Transverse colon (tissue), 4 donors: ENCODE measurements at regions of chr1 and their contacts with region 1.

Region 1: GRCh38 chr1:109539676-109540075 is at the start of gene GPR61:
- DNase-seq: no peak
- H3K4me3 ChIP-seq: no peak within 1 kb of the TSS
- H3K27ac ChIP-seq: no peak within 1 kb of the TSS
- H3K4me1 ChIP-seq: peaks cover 0 to 10% (median 0%) of the 10 kb centered on the region in 4 donors
- H3K27me3 ChIP-seq: no peaks in the 10 kb centered on the region
- CTCF ChIP-seq: no peak
- EP300 ChIP-seq: no peak
- POLR2A ChIP-seq: no peak
- total RNA-seq, gene GPR61: not detected

Region 2: GRCh38 chr1:109466452-109467300 is 73.0 kb before region 1 on chr1 and contains the start of gene SYPL2:
- in situ Hi-C with region 1: no loop called
- intact Hi-C with region 1: no loop called
- DNase-seq: peak; percentile 51
- H3K4me3 ChIP-seq: peak within 1 kb of the TSS; percentile 34 to 58 (median 52)
- H3K27ac ChIP-seq: peak within 1 kb of the TSS; percentile 54 to 85 (median 70)
- H3K4me1 ChIP-seq: peaks cover 0 to 25% (median 12%) of the 10 kb centered on the region in 4 donors
- H3K27me3 ChIP-seq: peaks cover 92% of the 10 kb centered on the region
- CTCF ChIP-seq: no peak
- EP300 ChIP-seq: no peak
- POLR2A ChIP-seq: no peak
- total RNA-seq, gene SYPL2: 0.40 to 4.1 (median 0.44) TPM

Region 3: DNA sequence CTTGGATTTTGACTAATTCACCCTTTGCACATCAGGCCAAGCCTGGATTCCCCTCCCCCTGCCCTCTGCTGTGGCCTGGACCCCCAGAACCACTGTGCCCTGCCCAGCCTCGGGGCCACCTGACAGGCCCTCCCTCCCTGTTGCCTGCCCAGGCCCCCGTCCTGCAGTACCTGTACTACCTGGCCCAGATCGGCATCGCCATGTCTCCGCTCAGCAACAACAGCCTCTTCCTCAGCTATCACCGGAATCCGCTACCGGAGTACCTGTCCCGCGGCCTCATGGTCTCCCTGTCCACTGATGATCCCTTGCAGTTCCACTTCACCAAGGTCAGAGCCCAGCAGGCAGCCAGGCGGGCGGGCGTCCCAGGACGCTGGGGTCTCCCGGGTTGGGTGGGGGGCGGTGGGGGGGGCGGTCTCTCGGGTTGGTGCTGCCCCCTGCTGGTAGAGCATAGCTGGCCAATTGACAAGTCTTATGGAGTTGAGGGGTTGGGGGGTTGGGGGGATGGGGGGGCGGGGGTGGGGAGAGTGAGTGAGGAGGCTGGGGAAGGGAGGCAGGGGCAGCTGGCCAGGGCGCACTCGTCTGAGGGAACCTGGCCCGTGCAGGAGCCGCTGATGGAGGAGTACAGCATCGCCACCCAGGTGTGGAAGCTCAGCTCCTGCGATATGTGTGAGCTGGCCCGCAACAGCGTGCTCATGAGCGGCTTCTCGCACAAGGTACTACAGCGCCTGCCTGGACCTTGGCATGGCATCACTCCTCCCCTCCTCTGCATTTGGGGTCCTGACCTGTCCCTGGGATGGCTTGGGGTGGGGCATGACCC is 90.6 kb after region 1 on chr1:
- in situ Hi-C with region 1: loop called in 3 of 4 experiments (anchors 5 to 10 kb)
- intact Hi-C with region 1: no loop called
- DNase-seq: no peak
- H3K4me3 ChIP-seq: no peak overlapping the region
- H3K27ac ChIP-seq: no peak overlapping the region
- H3K4me1 ChIP-seq: peaks cover 3 to 20% (median 10%) of the 10 kb centered on the region in 4 donors
- H3K27me3 ChIP-seq: no peaks in the 10 kb centered on the region
- CTCF ChIP-seq: peak in 3 of 5 experiments; percentile 39 to 48 (median 45)
- EP300 ChIP-seq: no peak
- POLR2A ChIP-seq: no peak

Region 4: DNA sequence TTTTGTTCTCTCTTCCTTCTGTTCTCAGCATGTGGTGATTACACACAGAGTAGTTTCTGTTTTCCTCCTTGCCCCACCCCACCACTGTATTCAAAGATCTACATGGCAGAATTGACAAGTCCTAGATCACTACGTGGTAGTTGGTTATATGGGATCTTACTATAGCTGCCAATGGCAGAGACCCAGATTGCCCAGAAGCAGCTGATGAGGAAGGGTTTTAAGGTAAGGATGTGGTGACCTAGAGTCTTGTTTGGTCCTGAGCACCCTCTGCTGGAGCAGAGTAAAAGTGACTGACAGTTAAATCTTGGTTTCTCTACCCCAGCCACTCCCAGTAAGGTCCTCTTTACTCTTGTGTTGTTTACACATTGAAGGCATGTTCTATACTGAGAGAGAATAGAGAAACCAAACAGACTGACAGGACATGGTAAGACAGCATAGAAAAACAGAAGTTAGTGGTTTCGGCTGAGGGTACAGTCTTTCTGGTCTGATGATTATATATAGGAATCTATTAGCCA is 471.9 kb after region 1 on chr1:
- in situ Hi-C with region 1: no loop called
- intact Hi-C with region 1: no loop called
- DNase-seq: peak; percentile 50
- H3K4me3 ChIP-seq: no peak overlapping the region
- H3K27ac ChIP-seq: peak overlapping the region; percentile 18 to 48 (median 22)
- H3K4me1 ChIP-seq: peaks cover 0 to 18% (median 7%) of the 10 kb centered on the region in 4 donors
- H3K27me3 ChIP-seq: no peaks in the 10 kb centered on the region
- CTCF ChIP-seq: peak; percentile 46 to 69 (median 57)
- EP300 ChIP-seq: no peak
- POLR2A ChIP-seq: no peak